ENCODE measurements at regions of chr9 and their contacts with region 1.

Region 1: DNA sequence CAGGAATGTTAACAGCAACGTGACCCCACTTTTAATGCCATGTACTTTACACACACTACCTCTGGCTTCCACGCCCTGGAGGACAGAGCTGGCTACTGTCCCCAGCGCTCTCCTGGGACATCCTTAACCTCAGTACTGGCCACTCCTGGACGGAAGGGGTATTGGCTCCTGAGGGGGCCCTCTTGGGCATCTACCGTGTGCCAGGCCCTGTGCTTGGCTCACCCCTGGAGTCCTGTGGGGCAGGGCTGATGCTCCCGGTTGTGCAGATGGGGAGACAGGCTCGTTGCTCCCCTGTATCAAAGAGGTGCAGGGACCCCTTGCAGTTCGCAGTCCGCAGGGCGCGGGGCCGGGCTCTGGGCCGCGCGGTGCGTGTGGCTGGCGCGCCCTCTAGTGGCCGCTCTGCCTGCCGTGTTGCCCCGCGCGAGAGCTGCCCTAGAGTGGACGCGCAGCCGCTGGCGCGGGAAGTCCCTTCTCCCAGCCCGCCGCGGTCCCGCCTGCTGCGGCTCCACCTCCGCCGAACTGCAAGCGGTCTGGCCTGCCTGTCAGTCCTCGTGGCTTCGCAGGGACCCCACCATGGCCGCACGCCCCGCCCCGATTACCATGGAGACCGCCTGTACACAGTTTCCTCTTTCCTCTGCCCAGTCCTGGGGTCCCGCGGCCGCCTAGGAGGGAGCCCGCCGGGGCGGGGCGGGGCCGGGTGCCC is at the start of gene WDR38:
- DNase-seq: peak; percentile 82
- H3K4me3 ChIP-seq: peak within 1 kb of the TSS; percentile 67
- H3K27ac ChIP-seq: peak within 1 kb of the TSS; percentile 95
- H3K4me1 ChIP-seq: peaks cover 40% of the 10 kb centered on the region
- H3K27me3 ChIP-seq: no peaks in the 10 kb centered on the region
- CTCF ChIP-seq: peak; percentile 97
- total RNA-seq, gene WDR38: not detected

Region 2: GRCh38 chr9:124774129-124774978 is 78.6 kb before region 1 on chr9:
- intact Hi-C with region 1: loop called (anchors 2 kb)
- DNase-seq: peak; percentile 87
- H3K4me3 ChIP-seq: no peak overlapping the region
- H3K27ac ChIP-seq: peak overlapping the region; percentile 12
- H3K4me1 ChIP-seq: peaks cover 64% of the 10 kb centered on the region
- H3K27me3 ChIP-seq: peaks cover 9% of the 10 kb centered on the region
- CTCF ChIP-seq: peak; percentile 86

Measured in left ventricle myocardium inferior (tissue), 1 donor.